HCT116 (cell line): ENCODE measurements at regions of chr3 and their contacts with region 1.

Region 1: DNA sequence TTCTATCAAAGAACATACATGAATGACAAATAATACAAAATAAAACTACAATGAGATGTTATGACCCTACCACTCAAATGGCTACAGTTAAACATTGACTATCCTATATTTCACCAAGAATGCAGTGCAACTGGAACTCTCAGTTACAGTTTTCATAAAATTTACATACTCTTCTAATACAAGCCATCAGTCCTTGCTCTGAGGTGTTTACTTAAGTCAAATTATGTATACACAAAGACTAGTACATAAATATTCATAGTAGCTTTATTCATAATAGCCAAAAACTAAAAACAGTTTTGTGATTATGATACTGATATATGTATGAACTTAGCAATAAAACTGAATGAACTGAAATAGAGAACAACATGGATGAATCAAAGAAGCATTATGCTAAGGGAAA is 19.2 kb downstream of the MLF1 start:
- DNase-seq: no peak
- ATAC-seq: no peak
- H3K4me3 ChIP-seq: no peak overlapping the region
- H3K27ac ChIP-seq: no peak overlapping the region
- H3K4me1 ChIP-seq: peaks cover 0 to 12% of the 10 kb centered on the region in 2 experiments; a peak in 2 of 4 replicates
- H3K27me3 ChIP-seq: no peaks in the 10 kb centered on the region
- CTCF ChIP-seq: no peak
- POLR2A ChIP-seq: no peak
- RAD21 ChIP-seq: no peak

Region 2: DNA sequence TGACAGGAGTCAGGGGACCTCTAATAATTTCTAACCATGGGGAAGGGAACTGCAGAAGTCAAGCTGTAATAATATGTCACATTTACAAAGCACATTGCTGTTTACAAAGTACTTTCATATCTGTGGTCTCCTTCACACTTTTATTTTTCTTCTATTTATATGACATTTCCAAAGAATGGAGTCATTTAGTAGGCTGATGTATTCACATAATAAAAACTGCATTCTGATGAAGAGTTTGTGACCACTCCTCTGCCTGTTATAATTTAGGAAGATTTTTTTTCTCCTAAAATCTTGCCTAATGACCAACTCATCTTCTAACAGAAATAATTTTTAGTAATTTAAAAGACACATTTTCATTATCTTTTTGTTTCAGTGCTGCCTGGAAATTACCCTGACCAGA is 814.8 kb before region 1 on chr3:
- CTCF ChIA-PET with region 1: no interaction called
- POLR2A ChIA-PET with region 1: no interaction called
- RAD21 ChIA-PET with region 1: no interaction called
- intact Hi-C with region 1: no loop called
- DNase-seq: no peak
- ATAC-seq: no peak
- H3K4me3 ChIP-seq: no peak overlapping the region
- H3K27ac ChIP-seq: no peak overlapping the region
- H3K4me1 ChIP-seq: no peaks in the 10 kb centered on the region
- H3K27me3 ChIP-seq: no peaks in the 10 kb centered on the region
- CTCF ChIP-seq: no peak
- POLR2A ChIP-seq: no peak
- RAD21 ChIP-seq: no peak

Region 3: GRCh38 chr3:158544811-158545210 is 45.4 kb before region 1 on chr3:
- CTCF ChIA-PET with region 1: no interaction called
- POLR2A ChIA-PET with region 1: no interaction called
- RAD21 ChIA-PET with region 1: no interaction called
- intact Hi-C with region 1: loop called (anchors 2 kb)
- DNase-seq: no peak
- ATAC-seq: no peak
- H3K4me3 ChIP-seq: no peak overlapping the region
- H3K27ac ChIP-seq: no peak overlapping the region
- H3K4me1 ChIP-seq: no peaks in the 10 kb centered on the region
- H3K27me3 ChIP-seq: no peaks in the 10 kb centered on the region
- CTCF ChIP-seq: no peak
- POLR2A ChIP-seq: no peak
- RAD21 ChIP-seq: no peak